ENCODE measurements at regions of chr2 and their contacts with region 1.

Region 1: GRCh38 chr2:61210331-61210981 is 48.5 kb downstream of the C2orf74 start:
- DNase-seq: no peak
- ATAC-seq: peak; percentile 63

Region 2: DNA sequence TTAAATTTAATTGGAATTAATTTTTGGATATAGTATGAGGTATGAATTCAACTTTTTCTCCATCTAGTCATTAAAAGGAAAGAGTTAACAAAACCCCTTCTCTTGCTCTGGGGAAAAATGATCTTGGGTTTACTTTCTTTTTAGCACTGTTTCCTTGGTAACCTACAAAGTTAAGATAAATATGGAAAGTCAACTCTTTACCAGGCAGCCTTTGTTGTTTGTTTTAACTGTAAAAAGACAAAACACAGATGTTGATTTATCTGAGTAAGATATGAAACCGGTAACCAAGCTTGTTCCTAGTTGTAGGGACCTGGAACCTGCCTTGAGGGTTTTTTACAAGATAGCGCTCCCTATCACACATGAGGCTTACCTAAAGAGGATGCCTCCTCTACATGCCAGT is 154.9 kb before region 1 on chr2:
- intact Hi-C with region 1: no loop called
- DNase-seq: no peak
- ATAC-seq: no peak

Region 3: GRCh38 chr2:61288070-61288841 is 77.8 kb after region 1 on chr2:
- intact Hi-C with region 1: loop called (anchors 10 kb)
- DNase-seq: no peak
- ATAC-seq: no peak

Region 4: DNA sequence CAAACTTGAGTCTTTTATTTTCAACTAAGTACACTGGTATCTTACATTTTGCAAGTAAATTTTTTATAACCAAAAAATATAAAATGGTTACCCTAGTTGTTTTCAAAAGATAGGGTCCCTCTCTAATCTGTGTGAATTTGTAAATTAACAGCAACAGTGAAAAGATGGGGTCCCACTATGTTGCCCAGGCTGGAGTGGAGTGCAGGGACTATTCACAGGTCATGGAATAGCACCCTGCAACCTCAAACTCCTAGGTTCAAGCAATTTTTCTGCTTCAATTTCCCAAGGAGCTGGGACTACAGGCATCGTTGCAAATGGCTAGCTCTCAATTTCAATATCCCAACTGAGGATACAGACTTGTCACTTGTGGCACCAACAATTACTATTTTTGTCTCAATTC is 665.9 kb after region 1 on chr2:
- intact Hi-C with region 1: no loop called
- DNase-seq: no peak
- ATAC-seq: no peak

Measured in left ventricle myocardium superior (tissue), 1 donor.